ENCODE measurements at regions of chr16 and their contacts with region 1.

Region 1: DNA sequence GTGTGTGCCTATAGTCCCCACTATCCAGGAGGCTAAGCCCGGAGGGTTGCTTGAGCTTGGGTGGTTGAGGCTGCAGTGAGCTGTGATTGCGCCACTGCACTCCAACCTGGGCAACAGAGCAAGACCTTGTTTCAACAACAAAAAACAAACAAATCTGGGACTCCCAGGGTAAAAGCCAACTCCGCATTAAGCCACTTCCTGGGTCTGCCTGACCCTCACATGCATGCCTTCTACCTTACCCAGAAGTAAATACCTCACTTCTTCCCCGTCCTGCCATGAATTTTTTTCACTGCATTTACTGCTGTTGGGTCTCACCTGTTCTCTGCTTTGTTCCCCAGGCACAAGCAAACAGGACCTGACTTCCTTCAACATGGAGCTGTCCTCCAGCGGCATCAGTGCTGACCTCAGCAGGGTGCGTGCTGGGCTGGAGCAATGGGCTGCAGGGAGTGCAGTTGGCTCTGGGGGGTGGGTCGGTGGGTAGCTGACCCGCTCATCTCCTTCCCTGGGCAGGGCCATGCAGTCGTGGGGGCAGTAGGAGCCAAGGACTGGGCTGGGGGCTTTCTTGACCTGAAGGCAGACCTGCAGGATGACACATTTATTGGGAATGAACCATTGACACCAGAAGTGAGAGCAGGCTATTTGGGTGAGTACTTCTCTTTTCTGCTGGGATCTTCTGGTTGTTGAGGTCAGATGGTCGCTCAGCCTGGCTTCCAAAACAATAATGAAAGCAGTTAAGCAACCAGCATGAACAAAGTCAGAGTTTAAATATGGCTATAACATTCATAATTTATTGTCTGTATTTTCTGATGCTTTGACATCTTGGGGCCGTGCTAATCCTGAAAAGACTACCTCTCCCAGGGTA is 16.4 kb downstream of the ITGAL start:
- DNase-seq: no peak
- H3K4me3 ChIP-seq: no peak overlapping the region
- H3K27me3 ChIP-seq: no peaks in the 10 kb centered on the region
- CTCF ChIP-seq: no peak

Region 2: GRCh38 chr16:30499284-30499683 is 10.3 kb after region 1 on chr16:
- CTCF ChIA-PET with region 1: no interaction called
- POLR2A ChIA-PET with region 1: interaction called, 11 read pairs
- DNase-seq: no peak
- H3K4me3 ChIP-seq: no peak overlapping the region
- H3K27me3 ChIP-seq: peaks cover 5% of the 10 kb centered on the region
- CTCF ChIP-seq: no peak

Measured in BJ (cell line).